ENCODE measurements at regions of chrX and their contacts with region 1.

Region 1: DNA sequence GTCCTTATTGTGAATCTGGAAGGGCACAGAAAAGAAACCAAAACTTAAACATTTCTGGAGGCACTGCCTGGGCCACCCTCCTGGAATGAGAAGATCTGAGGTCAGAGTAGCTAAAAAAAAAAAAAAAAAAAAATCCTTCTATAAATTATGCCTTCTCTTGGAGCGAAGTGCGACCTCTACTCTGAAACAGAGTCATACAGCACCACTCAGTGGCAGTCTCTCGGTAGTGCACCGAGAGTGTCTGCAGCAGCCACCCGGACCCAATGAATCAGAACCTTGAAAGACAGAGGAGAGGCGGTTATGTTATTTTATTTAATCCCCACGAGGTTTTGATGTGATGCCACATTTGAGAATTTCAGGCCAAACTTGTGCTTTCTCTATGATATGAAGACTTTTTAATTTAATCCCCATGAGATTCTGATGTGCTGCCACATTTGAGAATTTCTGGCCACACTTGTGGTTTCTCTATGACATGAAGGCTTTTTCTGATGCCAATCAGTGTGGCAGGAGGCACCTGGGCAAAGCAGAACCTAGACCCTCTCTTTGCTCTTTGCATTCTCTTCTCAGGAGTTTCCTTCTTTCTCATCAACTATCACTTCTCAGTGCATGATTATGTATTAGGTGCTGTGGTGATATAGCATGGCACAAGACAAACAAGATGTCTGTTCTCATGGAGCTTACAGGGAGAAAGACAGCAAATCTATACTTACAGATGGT is 5.6 kb upstream of the CT47C1 start:
- DNase-seq: peak; percentile 26
- ATAC-seq: peak; percentile 75
- H3K4me3 ChIP-seq: no peak overlapping the region
- H3K27ac ChIP-seq: no peak overlapping the region
- H3K4me1 ChIP-seq: no peaks in the 10 kb centered on the region
- H3K27me3 ChIP-seq: no peaks in the 10 kb centered on the region
- CTCF ChIP-seq: peak; percentile 61 to 71 (median 63)
- POLR2A ChIP-seq: no peak
- RAD21 ChIP-seq: peak; percentile 82

Region 2: DNA sequence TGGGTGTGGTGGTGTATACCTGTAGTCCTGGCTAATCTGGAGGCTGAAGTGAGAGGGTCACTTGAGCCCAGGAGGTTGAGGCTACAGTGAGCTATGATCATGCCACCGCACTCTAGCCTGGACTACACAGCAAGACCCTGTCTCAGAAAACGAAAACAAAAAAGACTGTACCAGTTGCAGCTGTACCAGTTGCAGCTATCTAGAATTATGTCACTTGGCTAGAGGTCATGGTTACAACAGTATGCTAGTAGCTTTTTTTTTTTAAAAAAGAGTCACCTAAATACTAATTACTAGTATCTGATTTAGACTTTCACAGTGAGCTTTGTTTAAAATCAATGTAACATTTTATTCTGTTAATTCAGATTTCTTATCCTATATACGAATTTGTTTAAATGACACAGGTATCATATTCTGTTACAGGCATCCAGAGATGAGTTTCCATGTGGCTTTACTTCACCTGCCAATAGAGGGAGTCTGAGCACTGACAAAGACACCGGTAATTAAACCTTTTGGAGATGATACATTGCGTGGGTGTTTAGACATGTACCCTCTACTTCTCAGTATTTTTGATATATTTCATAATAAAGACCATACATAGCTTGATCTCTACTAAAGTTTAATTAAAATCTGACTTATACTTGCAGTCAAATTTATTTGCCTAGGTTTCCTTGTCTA is 440.0 kb before region 1 on chrX:
- CTCF ChIA-PET with region 1: no interaction called
- POLR2A ChIA-PET with region 1: no interaction called
- RAD21 ChIA-PET with region 1: no interaction called
- intact Hi-C with region 1: loop called (anchors 10 kb)
- DNase-seq: no peak
- ATAC-seq: peak; percentile 68
- H3K4me3 ChIP-seq: no peak overlapping the region
- H3K27ac ChIP-seq: no peak overlapping the region
- H3K4me1 ChIP-seq: no peaks in the 10 kb centered on the region
- H3K27me3 ChIP-seq: no peaks in the 10 kb centered on the region
- CTCF ChIP-seq: peak; percentile 28 to 59 (median 51); a peak in 5 of 6 replicates
- POLR2A ChIP-seq: no peak
- RAD21 ChIP-seq: peak; percentile 55

Region 3: GRCh38 chrX:118839334-118839958 is 227.7 kb before region 1 on chrX:
- CTCF ChIA-PET with region 1: interaction called, 11 read pairs
- POLR2A ChIA-PET with region 1: no interaction called
- RAD21 ChIA-PET with region 1: interaction called in 1 of 2 experiments, 4 read pairs
- intact Hi-C with region 1: loop called (anchors 2 kb)
- DNase-seq: peak; percentile 19
- ATAC-seq: peak; percentile 98
- H3K4me3 ChIP-seq: peak overlapping the region; percentile 13 to 44; a peak in 3 of 4 replicates
- H3K27ac ChIP-seq: no peak overlapping the region
- H3K4me1 ChIP-seq: peaks cover 3 to 4% of the 10 kb centered on the region in 2 experiments; a peak in 2 of 4 replicates
- H3K27me3 ChIP-seq: no peaks in the 10 kb centered on the region
- CTCF ChIP-seq: peak; percentile 53 to 57 (median 54)
- POLR2A ChIP-seq: no peak
- RAD21 ChIP-seq: peak; percentile 39

Region 4: GRCh38 chrX:118847676-118848075 is 219.5 kb before region 1 on chrX:
- CTCF ChIA-PET with region 1: interaction called, 39 read pairs
- POLR2A ChIA-PET with region 1: no interaction called
- RAD21 ChIA-PET with region 1: interaction called, 4 to 5 read pairs
- intact Hi-C with region 1: loop called (anchors 1 kb)
- DNase-seq: peak; percentile 38
- ATAC-seq: peak; percentile 65; the same call in 1 of the 2 replicates
- H3K4me3 ChIP-seq: no peak overlapping the region
- H3K27ac ChIP-seq: no peak overlapping the region
- H3K4me1 ChIP-seq: no peaks in the 10 kb centered on the region
- H3K27me3 ChIP-seq: no peaks in the 10 kb centered on the region
- CTCF ChIP-seq: peak; percentile 44 to 64 (median 58); a peak in 5 of 6 replicates
- POLR2A ChIP-seq: no peak
- RAD21 ChIP-seq: peak; percentile 77

Region 5: DNA sequence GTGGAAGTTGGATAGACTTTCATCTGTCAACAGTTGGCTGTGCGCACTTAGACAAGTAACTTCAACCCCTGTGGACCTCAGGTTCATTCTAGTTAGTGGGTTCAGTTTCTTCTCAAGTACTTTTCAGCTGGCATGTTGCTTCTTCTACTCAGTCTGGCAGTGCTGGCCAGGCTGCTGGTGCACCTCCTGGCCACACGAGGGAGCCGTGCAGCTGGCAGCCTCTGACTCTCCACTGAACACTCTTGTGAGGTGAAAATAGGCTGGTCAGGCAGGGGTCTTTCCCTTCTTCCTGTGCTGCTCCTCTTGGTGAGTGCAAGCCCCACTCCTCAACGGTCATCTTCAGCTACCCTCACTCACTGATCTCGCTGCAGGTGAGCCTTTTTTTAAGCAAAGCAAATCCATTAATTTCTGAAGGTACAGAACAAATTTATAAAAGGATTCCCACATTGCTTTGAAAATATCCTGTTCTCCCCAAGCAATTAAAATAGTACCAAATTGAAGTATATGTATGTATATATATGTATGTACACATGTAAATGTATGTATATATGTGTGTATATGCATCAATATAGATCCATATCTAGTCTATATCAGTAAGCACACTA is 62.2 kb before region 1 on chrX:
- CTCF ChIA-PET with region 1: interaction called, 15 read pairs
- POLR2A ChIA-PET with region 1: no interaction called
- RAD21 ChIA-PET with region 1: interaction called in 1 of 2 experiments, 4 read pairs
- intact Hi-C with region 1: loop called (anchors 2 kb)
- DNase-seq: no peak
- ATAC-seq: peak; percentile 89
- H3K4me3 ChIP-seq: no peak overlapping the region
- H3K27ac ChIP-seq: no peak overlapping the region
- H3K4me1 ChIP-seq: no peaks in the 10 kb centered on the region
- H3K27me3 ChIP-seq: no peaks in the 10 kb centered on the region
- CTCF ChIP-seq: peak; percentile 44 to 86 (median 68); a peak in 5 of 6 replicates
- POLR2A ChIP-seq: no peak
- RAD21 ChIP-seq: peak; percentile 46; the same call in 1 of the 2 replicates

Region 6: GRCh38 chrX:119093991-119094737 is 27.0 kb after region 1 on chrX:
- CTCF ChIA-PET with region 1: no interaction called
- POLR2A ChIA-PET with region 1: no interaction called
- RAD21 ChIA-PET with region 1: no interaction called
- intact Hi-C with region 1: no loop called
- DNase-seq: no peak
- ATAC-seq: no peak
- H3K4me3 ChIP-seq: no peak overlapping the region
- H3K27ac ChIP-seq: no peak overlapping the region
- H3K4me1 ChIP-seq: no peaks in the 10 kb centered on the region
- H3K27me3 ChIP-seq: 0 out of 2 replicates have a peak, but pooled peaks cover 3% of the 10 kb centered on the region
- CTCF ChIP-seq: no peak
- POLR2A ChIP-seq: no peak
- RAD21 ChIP-seq: no peak

Region 7: GRCh38 chrX:119211649-119212014 is 144.5 kb after region 1 on chrX:
- CTCF ChIA-PET with region 1: no interaction called
- POLR2A ChIA-PET with region 1: no interaction called
- RAD21 ChIA-PET with region 1: interaction called in 1 of 2 experiments, 3 read pairs
- intact Hi-C with region 1: loop called (anchors 5 kb)
- DNase-seq: no peak
- ATAC-seq: no peak
- H3K4me3 ChIP-seq: no peak overlapping the region
- H3K27ac ChIP-seq: no peak overlapping the region
- H3K4me1 ChIP-seq: no peaks in the 10 kb centered on the region
- H3K27me3 ChIP-seq: no peaks in the 10 kb centered on the region
- CTCF ChIP-seq: no peak
- POLR2A ChIP-seq: no peak
- RAD21 ChIP-seq: no peak

Region 8: DNA sequence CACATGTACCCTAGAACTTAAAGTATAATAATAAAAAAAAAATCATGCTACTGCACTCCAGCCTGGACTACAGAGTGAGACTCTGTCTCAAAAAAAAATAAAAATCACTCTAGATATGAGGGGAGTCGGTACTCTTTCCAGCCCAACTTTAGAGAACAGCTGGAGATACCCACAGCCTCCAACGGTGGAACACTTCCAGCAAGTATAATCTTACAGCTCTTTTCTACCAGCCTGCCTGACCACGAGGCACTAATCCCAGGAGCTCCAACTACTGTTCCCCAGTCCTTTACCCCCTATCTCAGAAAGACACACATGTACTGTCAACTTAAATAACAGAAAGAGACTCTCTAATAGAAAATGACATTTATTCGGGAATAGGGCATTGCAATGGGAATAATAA is 451.2 kb after region 1 on chrX:
- CTCF ChIA-PET with region 1: no interaction called
- POLR2A ChIA-PET with region 1: no interaction called
- RAD21 ChIA-PET with region 1: no interaction called
- intact Hi-C with region 1: no loop called
- DNase-seq: no peak
- ATAC-seq: no peak
- H3K4me3 ChIP-seq: no peak overlapping the region
- H3K27ac ChIP-seq: no peak overlapping the region
- H3K4me1 ChIP-seq: peaks cover 0 to 3% of the 10 kb centered on the region in 2 experiments; a peak in 1 of 4 replicates
- H3K27me3 ChIP-seq: no peaks in the 10 kb centered on the region
- CTCF ChIP-seq: no peak
- POLR2A ChIP-seq: no peak
- RAD21 ChIP-seq: no peak

Measured in HCT116 (cell line).